ENCODE measurements at regions of chr18 and their contacts with region 1.

Region 1: GRCh38 chr18:8389391-8390340 is 219.6 kb upstream of the RAB12 start:
- DNase-seq: peak; percentile 78
- H3K4me3 ChIP-seq: no peak overlapping the region
- H3K27ac ChIP-seq: no peak overlapping the region
- H3K4me1 ChIP-seq: peaks cover 4% of the 10 kb centered on the region
- H3K27me3 ChIP-seq: no peaks in the 10 kb centered on the region
- CTCF ChIP-seq: peak; percentile 81 to 82
- POLR2A ChIP-seq: no peak

Region 2: DNA sequence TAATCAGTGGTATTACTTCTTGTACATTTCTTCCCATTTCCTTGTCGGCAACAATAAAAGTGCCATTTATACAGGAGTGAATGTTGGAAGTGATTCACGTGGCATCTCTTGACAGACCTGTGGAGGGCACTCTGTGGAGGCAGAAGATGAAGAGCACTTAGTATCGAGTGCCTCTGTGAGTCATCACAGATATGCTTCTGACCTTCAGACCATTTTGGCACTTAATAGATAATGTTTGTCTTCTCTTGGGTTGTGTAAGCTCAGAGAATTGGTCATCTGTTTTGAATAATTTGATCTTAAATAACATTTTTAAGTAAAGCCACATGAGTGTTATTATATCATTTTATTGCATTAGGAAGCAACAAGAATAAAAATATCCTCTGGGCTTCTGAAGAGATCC is 517.1 kb before region 1 on chr18:
- CTCF ChIA-PET with region 1: no interaction called
- POLR2A ChIA-PET with region 1: no interaction called
- dilution Hi-C with region 1: no loop called
- intact Hi-C with region 1: loop called (anchors 1 kb)
- DNase-seq: peak; percentile 54
- H3K4me3 ChIP-seq: no peak overlapping the region
- H3K27ac ChIP-seq: no peak overlapping the region
- H3K4me1 ChIP-seq: peaks cover under 1% of the 10 kb centered on the region
- H3K27me3 ChIP-seq: no peaks in the 10 kb centered on the region
- CTCF ChIP-seq: peak in 1 of 2 donors; percentile 18
- POLR2A ChIP-seq: no peak

Region 3: DNA sequence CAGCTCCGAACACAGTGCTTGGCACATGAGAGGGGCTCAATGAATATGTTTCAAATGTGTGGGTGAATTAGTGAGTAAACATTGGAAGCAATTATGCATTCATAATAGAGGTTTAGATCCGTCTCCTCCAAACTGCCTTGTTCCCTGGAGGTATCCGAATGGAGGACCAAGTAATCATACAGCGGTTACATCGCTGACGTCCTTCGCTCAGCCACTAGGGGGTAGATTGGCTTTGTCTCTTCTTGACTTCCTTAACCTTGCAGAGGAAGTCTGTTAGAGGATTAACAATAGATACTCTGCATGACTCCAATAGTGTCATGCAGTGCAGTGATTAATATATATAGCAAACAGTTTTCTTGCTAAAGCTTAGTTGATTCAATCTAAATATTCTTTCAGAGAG is 305.5 kb before region 1 on chr18:
- CTCF ChIA-PET with region 1: interaction called, 3 read pairs
- POLR2A ChIA-PET with region 1: no interaction called
- dilution Hi-C with region 1: no loop called
- intact Hi-C with region 1: loop called (anchors 1 kb)
- DNase-seq: peak; percentile 43
- H3K4me3 ChIP-seq: no peak overlapping the region
- H3K27ac ChIP-seq: no peak overlapping the region
- H3K4me1 ChIP-seq: no peaks in the 10 kb centered on the region
- H3K27me3 ChIP-seq: no peaks in the 10 kb centered on the region
- CTCF ChIP-seq: peak; percentile 55 to 64
- POLR2A ChIP-seq: no peak

Region 4: GRCh38 chr18:8348051-8348720 is 41.5 kb before region 1 on chr18:
- CTCF ChIA-PET with region 1: no interaction called
- POLR2A ChIA-PET with region 1: no interaction called
- dilution Hi-C with region 1: no loop called
- intact Hi-C with region 1: no loop called
- DNase-seq: no peak
- H3K4me3 ChIP-seq: no peak overlapping the region
- H3K27ac ChIP-seq: no peak overlapping the region
- H3K4me1 ChIP-seq: no peaks in the 10 kb centered on the region
- H3K27me3 ChIP-seq: no peaks in the 10 kb centered on the region
- CTCF ChIP-seq: no peak
- POLR2A ChIP-seq: no peak